Mammary epithelial cell (primary cell): ENCODE measurements at regions of chr1 and their contacts with region 1.

Region 1: DNA sequence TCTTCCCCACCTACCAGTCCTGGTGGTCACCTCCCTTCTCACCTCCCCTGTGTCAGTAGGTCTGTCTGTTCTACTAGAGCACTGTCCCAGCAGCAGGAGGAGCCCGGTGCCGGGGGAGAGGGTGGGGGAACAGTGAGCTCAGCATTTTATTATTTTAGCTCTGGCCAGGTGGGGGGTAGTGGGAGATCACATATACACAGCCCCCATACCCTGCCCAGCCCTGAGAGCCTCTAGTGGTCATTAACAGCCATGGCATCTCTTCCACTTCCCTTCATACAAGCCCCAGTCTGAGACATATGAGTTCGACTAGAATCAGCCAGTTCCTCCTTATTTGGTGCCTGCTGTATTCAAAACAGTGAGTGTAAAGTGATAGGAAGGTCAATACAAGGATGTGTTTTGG is at the start of gene TMOD4:
- DNase-seq: no peak
- H3K4me3 ChIP-seq: no peak within 1 kb of the TSS
- H3K27ac ChIP-seq: no peak within 1 kb of the TSS
- H3K4me1 ChIP-seq: peaks cover 11% of the 10 kb centered on the region
- H3K27me3 ChIP-seq: no peaks in the 10 kb centered on the region
- CTCF ChIP-seq: peak; percentile 49 to 52
- total RNA-seq, gene TMOD4: not detected

Region 2: DNA sequence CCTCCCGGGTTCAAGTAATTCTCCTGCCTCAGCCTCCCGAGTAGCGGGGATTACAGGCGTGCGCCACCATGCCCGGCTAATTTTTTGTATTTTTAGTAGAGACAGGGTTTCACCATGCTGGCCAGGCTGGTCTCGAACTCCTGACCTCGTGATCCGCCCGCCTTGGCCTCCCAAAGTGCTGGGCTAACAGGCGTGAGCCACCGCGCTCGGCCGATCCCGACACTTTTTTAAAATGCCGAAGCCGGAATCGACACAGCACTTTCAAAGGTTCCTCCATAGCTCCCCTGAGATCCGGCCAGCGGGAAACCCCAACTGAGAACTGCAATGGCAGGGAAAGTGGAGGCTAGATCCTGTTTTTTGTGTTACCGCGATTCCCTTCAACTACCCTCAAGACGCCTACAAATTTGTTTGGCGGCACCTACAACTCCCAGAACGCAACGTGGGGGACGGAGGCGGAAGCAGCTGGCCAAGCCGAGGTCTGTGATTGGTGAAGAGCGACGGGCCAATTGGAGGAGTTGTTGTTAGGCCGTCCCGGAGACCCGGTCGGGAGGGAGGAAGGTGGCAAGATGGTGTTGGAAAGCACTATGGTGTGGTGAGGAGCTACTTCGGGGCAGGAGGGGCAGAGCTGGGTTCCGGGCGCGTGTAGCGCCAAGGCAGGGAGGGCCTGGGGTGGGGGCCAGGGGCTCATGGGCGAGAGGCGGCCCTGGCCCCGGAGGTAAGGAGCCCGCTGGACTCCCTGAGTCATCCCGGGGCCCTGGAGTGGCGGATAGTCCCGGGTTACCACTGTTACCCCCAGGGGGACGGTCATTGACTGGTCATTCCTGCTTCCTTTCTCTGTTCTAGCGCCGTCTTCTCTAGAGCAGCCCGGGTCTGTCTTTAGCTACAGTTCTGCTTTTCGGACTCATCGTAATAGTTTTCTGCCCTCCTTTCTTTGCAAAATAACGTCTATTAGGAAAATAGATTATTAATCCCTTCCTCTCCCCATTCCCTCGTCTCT is 78.6 kb after region 1 on chr1 and contains the start of gene PSMD4:
- CTCF ChIA-PET with region 1: no interaction called
- dilution Hi-C with region 1: no loop called
- in situ Hi-C with region 1: no loop called
- intact Hi-C with region 1: loop called (anchors 2 kb)
- DNase-seq: peak; percentile 97
- H3K4me3 ChIP-seq: peak within 1 kb of the TSS; percentile 60 to 75 (median 72)
- H3K27ac ChIP-seq: peak within 1 kb of the TSS; percentile 70
- H3K4me1 ChIP-seq: peaks cover 9% of the 10 kb centered on the region
- H3K27me3 ChIP-seq: no peaks in the 10 kb centered on the region
- CTCF ChIP-seq: no peak
- total RNA-seq, gene PSMD4: 94.7 to 167 TPM

Region 3: GRCh38 chr1:151340870-151341754 is 165.2 kb after region 1 on chr1:
- CTCF ChIA-PET with region 1: no interaction called
- dilution Hi-C with region 1: no loop called
- in situ Hi-C with region 1: no loop called
- intact Hi-C with region 1: loop called (anchors 1 kb)
- DNase-seq: peak; percentile 72
- H3K4me3 ChIP-seq: no peak overlapping the region
- H3K27ac ChIP-seq: no peak overlapping the region
- H3K4me1 ChIP-seq: peaks cover 4% of the 10 kb centered on the region
- H3K27me3 ChIP-seq: no peaks in the 10 kb centered on the region
- CTCF ChIP-seq: peak; percentile 71 to 72

Region 4: GRCh38 chr1:151408891-151409290 is 233.0 kb after region 1 on chr1:
- CTCF ChIA-PET with region 1: no interaction called
- dilution Hi-C with region 1: no loop called
- in situ Hi-C with region 1: no loop called
- intact Hi-C with region 1: no loop called
- DNase-seq: peak; percentile 13
- H3K4me3 ChIP-seq: no peak overlapping the region
- H3K27ac ChIP-seq: no peak overlapping the region
- H3K4me1 ChIP-seq: no peaks in the 10 kb centered on the region
- H3K27me3 ChIP-seq: no peaks in the 10 kb centered on the region
- CTCF ChIP-seq: no peak

Region 5: DNA sequence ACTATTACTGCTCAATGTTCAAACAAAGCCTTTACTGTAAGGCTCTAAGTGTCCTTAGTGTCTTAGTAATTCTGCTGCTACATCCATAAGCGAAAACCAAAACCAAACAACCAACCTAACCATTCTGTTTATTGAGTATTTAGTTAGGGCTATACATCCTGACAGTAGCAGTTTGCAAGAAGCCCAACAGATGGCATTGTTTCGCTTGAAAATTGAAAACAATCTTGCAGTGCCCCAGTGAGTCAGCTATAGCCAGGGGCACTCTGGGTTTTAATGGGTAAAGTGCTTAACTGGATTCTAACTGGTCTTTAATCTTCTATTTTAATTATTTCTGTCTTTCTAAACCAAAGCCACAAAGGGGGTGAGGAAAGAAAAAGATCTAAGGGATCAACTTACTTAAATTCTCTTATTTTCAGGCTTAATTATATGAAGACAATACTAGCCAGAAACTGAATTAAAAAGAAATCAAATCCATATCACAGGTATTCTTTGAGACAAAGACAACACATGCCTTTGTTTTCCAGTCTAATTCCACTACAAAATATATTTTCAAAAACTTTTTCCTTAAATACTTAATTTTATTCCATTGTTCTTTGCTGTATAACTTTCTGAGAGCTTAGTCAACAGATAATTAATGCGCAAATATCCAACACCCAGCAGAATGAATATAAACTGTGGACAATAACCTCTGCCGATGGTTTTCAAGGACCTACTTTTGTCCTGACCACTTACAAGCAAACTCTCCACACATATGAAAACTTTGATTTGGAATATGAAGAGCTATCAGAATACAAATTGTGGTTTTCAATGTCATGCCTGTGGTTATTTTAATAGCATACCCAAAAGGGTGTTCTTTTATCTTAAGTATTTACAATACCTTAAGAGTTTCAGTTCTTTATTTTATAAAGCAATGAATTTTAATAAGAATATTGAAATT is 268.2 kb after region 1 on chr1:
- CTCF ChIA-PET with region 1: no interaction called
- dilution Hi-C with region 1: no loop called
- in situ Hi-C with region 1: no loop called
- intact Hi-C with region 1: no loop called
- DNase-seq: peak; percentile 77
- H3K4me3 ChIP-seq: no peak overlapping the region
- H3K27ac ChIP-seq: no peak overlapping the region
- H3K4me1 ChIP-seq: peaks cover 10% of the 10 kb centered on the region
- H3K27me3 ChIP-seq: no peaks in the 10 kb centered on the region
- CTCF ChIP-seq: peak; percentile 77 to 85